Posterior vena cava (tissue), 2 donors: ENCODE measurements at regions of chr6 and their contacts with region 1.

Region 1: DNA sequence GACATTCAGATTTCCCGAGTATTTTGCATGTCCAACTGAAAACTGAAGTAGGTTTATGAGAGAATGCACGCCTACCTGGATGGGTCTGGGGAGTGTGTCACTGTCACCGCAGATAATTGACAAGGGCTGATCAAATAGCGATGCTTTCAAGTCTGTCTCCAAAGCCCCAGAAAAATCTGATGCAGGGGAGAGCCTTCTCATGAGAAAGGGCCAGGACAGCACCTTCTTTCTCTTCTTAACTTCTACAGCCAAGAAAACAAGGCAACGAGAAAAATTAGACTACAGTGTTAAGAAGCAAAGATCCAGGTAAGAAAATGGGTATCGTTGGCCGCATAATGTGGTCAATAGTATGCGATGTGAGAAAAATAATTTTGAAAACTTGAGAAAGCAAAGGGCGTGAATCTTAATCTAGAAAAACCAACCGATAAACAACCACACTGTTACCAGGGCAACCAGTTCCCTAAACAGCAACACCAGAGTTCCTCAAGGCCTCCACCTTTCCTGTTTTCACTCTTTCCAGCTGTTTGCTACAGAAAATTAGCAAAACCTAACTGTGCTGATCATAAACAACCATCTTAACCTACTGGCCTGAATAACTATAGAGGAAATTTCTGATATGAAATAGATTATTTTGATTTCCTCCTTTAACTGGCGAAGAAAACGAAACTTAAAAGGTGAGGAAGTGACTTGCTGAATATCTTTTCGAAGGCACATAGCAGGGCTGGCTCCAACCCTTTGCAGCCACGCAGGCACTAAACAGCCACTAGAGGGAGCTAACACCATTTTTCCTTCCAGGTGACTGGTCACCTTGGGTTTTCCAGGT is 2.6 kb downstream of the TAGAP start:
- DNase-seq: no peak

Region 2: GRCh38 chr6:157682931-157683403 is 1359.2 kb before region 1 on chr6:
- intact Hi-C with region 1: no loop called
- DNase-seq: no peak

Region 3: DNA sequence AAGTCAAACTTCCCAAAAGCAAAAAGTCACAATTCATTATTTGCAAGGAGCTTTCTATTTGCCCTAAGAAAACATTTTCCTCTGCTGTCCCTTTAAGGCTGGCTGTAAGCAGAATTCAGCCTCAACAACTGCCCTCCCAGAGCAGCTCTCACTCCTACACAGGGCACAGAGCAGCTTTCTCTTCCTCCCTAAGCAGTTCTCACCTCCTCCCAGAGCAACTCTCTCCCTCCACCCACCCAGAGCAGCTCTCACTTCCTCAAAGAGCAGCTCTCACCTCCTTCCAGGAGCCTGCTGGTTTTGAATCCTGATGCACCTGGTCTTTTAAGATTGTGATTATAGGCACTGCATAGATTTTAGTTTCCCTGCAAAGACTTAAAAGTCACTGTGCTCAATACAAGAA is 603.0 kb before region 1 on chr6:
- intact Hi-C with region 1: no loop called
- DNase-seq: no peak

Region 4: DNA sequence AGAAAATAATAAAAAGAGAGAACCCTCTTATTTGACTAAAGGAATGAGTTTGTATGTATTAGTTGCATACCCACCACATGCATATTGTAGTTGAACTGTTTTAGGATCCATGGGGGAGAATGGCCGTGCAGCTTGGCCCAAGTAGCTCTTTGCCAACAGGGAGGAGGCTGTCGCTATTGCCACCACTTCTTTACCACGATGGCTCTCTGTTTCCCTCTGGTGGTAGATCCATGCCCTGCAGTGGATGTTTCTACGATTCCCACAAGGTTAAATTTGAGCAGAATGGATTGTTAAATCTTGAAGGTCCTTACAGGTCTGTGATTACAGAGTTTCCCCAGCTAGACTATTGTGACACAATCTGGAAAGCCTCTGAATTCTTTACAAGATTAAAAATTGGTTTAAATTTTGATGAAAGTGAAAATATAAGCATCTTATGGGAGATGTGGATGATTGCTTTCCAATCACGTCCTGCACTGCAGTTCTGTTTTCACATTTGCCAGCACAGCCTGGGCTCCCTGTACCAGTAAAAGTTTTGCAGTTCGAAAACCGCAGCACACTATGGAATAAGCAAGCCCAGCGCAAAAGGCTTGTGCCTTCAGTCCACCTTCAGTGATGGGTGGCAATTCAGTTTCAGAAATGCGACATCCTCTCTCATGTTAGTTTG is 92.6 kb after region 1 on chr6:
- intact Hi-C with region 1: loop called in 1 of 2 experiments (anchors 10 kb)
- DNase-seq: no peak

Region 5: GRCh38 chr6:159633196-159633595 is 591.0 kb after region 1 on chr6:
- intact Hi-C with region 1: loop called in 1 of 2 experiments (anchors 10 kb)
- DNase-seq: no peak